CD8-positive, alpha-beta T cell (primary cell): ENCODE measurements at regions of chr5 and their contacts with region 1.

Region 1: GRCh38 chr5:154857530-154858296 is 714 bp upstream of the CNOT8 start:
- DNase-seq: peak; percentile 76 to 95 (median 88)
- ATAC-seq: peak; percentile 48
- H3K4me3 ChIP-seq: peak overlapping the region; percentile 64 to 76
- H3K4me3 Mint-ChIP-seq: peak overlapping the region; percentile 86
- H3K27ac ChIP-seq: peak overlapping the region; percentile 90 to 97
- H3K27ac Mint-ChIP-seq: peak overlapping the region; percentile 94
- H3K4me1 ChIP-seq: peaks cover 31% of the 10 kb centered on the region
- H3K4me1 Mint-ChIP-seq: peaks cover 39% of the 10 kb centered on the region
- H3K27me3 ChIP-seq: no peaks in the 10 kb centered on the region
- H3K27me3 Mint-ChIP-seq: no peaks in the 10 kb centered on the region
- CTCF ChIP-seq: no peak

Region 2: GRCh38 chr5:154038707-154039457 is 818.8 kb before region 1 on chr5 and contains the starts of genes FAM114A2 and MFAP3:
- CTCF ChIA-PET with region 1: no interaction called
- POLR2A ChIA-PET with region 1: no interaction called
- intact Hi-C with region 1: loop called (anchors 1 to 2 kb)
- DNase-seq: peak; percentile 77 to 93 (median 88)
- ATAC-seq: peak; percentile 97
- H3K4me3 ChIP-seq: peak within 1 kb of the TSS; percentile 72 to 91
- H3K4me3 Mint-ChIP-seq: peak within 1 kb of the TSS; percentile 95
- H3K27ac ChIP-seq: peak within 1 kb of the TSS; percentile 84 to 95
- H3K27ac Mint-ChIP-seq: peak within 1 kb of the TSS; percentile 98
- H3K4me1 ChIP-seq: peaks cover 25% of the 10 kb centered on the region
- H3K4me1 Mint-ChIP-seq: peaks cover 76% of the 10 kb centered on the region
- H3K27me3 ChIP-seq: no peaks in the 10 kb centered on the region
- H3K27me3 Mint-ChIP-seq: no peaks in the 10 kb centered on the region
- CTCF ChIP-seq: no peak
- total RNA-seq, gene FAM114A2: 24.9 to 26.6 TPM
- total RNA-seq, gene MFAP3: 16.6 to 20.2 TPM

Region 3: GRCh38 chr5:154196955-154197652 is 660.6 kb before region 1 on chr5:
- CTCF ChIA-PET with region 1: no interaction called
- POLR2A ChIA-PET with region 1: no interaction called
- intact Hi-C with region 1: loop called (anchors 5 to 10 kb)
- DNase-seq: peak in 2 of 9 experiments; percentile 30 to 57
- ATAC-seq: peak; percentile 10
- H3K4me3 ChIP-seq: no peak overlapping the region
- H3K4me3 Mint-ChIP-seq: peak overlapping the region; percentile 35
- H3K27ac ChIP-seq: peak overlapping the region in 1 of 2 experiments; percentile 72
- H3K27ac Mint-ChIP-seq: peak overlapping the region; percentile 94
- H3K4me1 ChIP-seq: peaks cover 57% of the 10 kb centered on the region
- H3K4me1 Mint-ChIP-seq: peaks cover 68% of the 10 kb centered on the region
- H3K27me3 ChIP-seq: no peaks in the 10 kb centered on the region
- H3K27me3 Mint-ChIP-seq: no peaks in the 10 kb centered on the region
- CTCF ChIP-seq: no peak

Region 4: DNA sequence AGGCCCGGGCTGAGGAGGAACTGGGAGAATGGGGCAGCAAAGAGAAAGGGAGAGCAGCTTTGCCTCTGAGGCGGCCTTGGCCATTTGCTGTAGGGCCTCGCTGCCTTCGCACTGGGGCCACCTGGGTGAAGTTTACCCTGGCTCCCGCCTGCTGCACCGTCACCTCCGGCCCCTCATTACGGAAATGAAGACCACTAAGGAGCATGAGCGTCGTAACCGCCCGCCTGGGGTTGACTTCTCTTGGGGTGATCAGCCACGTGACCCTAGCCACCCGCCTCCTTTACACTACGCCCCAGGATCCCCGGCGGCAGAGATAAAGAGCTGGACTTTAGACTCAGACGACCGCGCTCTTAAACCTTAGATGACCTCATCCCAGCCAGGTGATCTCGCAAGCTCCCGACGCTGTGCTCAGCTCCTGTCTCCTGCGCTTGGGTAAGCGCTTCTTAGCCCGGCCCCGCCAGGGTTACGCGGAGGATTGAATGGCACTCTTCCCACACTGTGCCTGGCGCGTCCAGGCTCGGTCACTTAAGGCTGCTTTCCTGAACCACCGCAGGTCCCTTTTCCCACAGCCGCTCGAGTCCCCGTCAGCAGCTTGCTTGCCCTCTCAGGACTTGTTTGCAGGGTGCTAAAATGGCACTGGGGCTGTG is 210.5 kb before region 1 on chr5:
- CTCF ChIA-PET with region 1: interaction called, 4 read pairs
- POLR2A ChIA-PET with region 1: interaction called, 3 read pairs
- intact Hi-C with region 1: loop called (anchors 1 to 5 kb)
- DNase-seq: peak in 8 of 9 experiments; percentile 9 to 70 (median 39)
- ATAC-seq: peak; percentile 68
- H3K4me3 ChIP-seq: peak overlapping the region; percentile 53 to 75
- H3K4me3 Mint-ChIP-seq: peak overlapping the region; percentile 89
- H3K27ac ChIP-seq: peak overlapping the region in 1 of 2 experiments; percentile 1
- H3K27ac Mint-ChIP-seq: peak overlapping the region; percentile 66
- H3K4me1 ChIP-seq: peaks cover 6% of the 10 kb centered on the region
- H3K4me1 Mint-ChIP-seq: peaks cover 15% of the 10 kb centered on the region
- H3K27me3 ChIP-seq: no peaks in the 10 kb centered on the region
- H3K27me3 Mint-ChIP-seq: no peaks in the 10 kb centered on the region
- CTCF ChIP-seq: no peak

Region 5: GRCh38 chr5:154683101-154683880 is 174.4 kb before region 1 on chr5:
- CTCF ChIA-PET with region 1: no interaction called
- POLR2A ChIA-PET with region 1: no interaction called
- intact Hi-C with region 1: loop called in 1 of 2 experiments (anchors 1 kb)
- DNase-seq: no peak
- ATAC-seq: no peak
- H3K4me3 ChIP-seq: peak overlapping the region; percentile 54 to 58
- H3K4me3 Mint-ChIP-seq: peak overlapping the region; percentile 58
- H3K27ac ChIP-seq: no peak overlapping the region
- H3K27ac Mint-ChIP-seq: no peak overlapping the region
- H3K4me1 ChIP-seq: no peaks in the 10 kb centered on the region
- H3K4me1 Mint-ChIP-seq: peaks cover 7% of the 10 kb centered on the region
- H3K27me3 ChIP-seq: no peaks in the 10 kb centered on the region
- H3K27me3 Mint-ChIP-seq: peaks cover 5% of the 10 kb centered on the region
- CTCF ChIP-seq: no peak

Region 6: GRCh38 chr5:154940772-154941620 is 83.3 kb after region 1 on chr5 and contains the start of gene MRPL22:
- CTCF ChIA-PET with region 1: no interaction called
- POLR2A ChIA-PET with region 1: interaction called, 3 read pairs
- intact Hi-C with region 1: loop called (anchors 1 kb)
- DNase-seq: peak; percentile 89 to 97 (median 95)
- ATAC-seq: peak; percentile 70
- H3K4me3 ChIP-seq: peak within 1 kb of the TSS; percentile 82 to 92
- H3K4me3 Mint-ChIP-seq: peak within 1 kb of the TSS; percentile 100
- H3K27ac ChIP-seq: peak within 1 kb of the TSS; percentile 73 to 80
- H3K27ac Mint-ChIP-seq: peak within 1 kb of the TSS; percentile 98
- H3K4me1 ChIP-seq: peaks cover 36% of the 10 kb centered on the region
- H3K4me1 Mint-ChIP-seq: peaks cover 53% of the 10 kb centered on the region
- H3K27me3 ChIP-seq: no peaks in the 10 kb centered on the region
- H3K27me3 Mint-ChIP-seq: no peaks in the 10 kb centered on the region
- CTCF ChIP-seq: no peak
- total RNA-seq, gene MRPL22: 42.2 TPM

Region 7: GRCh38 chr5:156675395-156675794 is 1817.7 kb after region 1 on chr5:
- CTCF ChIA-PET with region 1: no interaction called
- POLR2A ChIA-PET with region 1: no interaction called
- intact Hi-C with region 1: no loop called
- DNase-seq: no peak
- ATAC-seq: no peak
- H3K4me3 ChIP-seq: no peak overlapping the region
- H3K4me3 Mint-ChIP-seq: no peak overlapping the region
- H3K27ac ChIP-seq: no peak overlapping the region
- H3K27ac Mint-ChIP-seq: no peak overlapping the region
- H3K4me1 ChIP-seq: no peaks in the 10 kb centered on the region
- H3K4me1 Mint-ChIP-seq: no peaks in the 10 kb centered on the region
- H3K27me3 ChIP-seq: no peaks in the 10 kb centered on the region
- H3K27me3 Mint-ChIP-seq: no peaks in the 10 kb centered on the region
- CTCF ChIP-seq: no peak